ENCODE measurements at regions of chr7 and their contacts with region 1.

Region 1: DNA sequence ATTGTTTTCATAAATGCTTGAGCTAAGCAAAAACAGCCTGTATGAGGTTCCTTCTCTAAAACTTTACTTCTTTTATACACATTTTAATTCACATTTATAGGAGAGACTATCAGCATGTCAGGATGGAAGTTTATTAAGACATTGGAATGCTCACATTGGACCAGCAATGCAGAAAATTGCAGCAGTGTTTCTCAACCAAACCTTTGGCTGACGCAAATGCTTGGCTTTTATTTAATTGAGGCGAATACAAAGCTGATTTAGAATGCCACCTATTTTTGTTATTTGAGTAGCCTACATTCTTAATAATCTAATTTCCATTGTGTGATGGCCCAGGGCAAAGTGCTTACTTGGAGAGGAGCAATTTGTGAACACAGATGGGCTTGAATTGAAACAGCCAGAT is 283.2 kb downstream of the ARL4A start:
- DNase-seq: no peak
- ATAC-seq: no peak
- H3K4me3 ChIP-seq: no peak overlapping the region
- H3K27ac ChIP-seq: no peak overlapping the region
- H3K4me1 ChIP-seq: peaks cover 0 to 5% of the 10 kb centered on the region in 2 experiments; a peak in 3 of 4 replicates
- H3K27me3 ChIP-seq: no peaks in the 10 kb centered on the region
- CTCF ChIP-seq: no peak
- POLR2A ChIP-seq: no peak
- RAD21 ChIP-seq: no peak

Region 2: DNA sequence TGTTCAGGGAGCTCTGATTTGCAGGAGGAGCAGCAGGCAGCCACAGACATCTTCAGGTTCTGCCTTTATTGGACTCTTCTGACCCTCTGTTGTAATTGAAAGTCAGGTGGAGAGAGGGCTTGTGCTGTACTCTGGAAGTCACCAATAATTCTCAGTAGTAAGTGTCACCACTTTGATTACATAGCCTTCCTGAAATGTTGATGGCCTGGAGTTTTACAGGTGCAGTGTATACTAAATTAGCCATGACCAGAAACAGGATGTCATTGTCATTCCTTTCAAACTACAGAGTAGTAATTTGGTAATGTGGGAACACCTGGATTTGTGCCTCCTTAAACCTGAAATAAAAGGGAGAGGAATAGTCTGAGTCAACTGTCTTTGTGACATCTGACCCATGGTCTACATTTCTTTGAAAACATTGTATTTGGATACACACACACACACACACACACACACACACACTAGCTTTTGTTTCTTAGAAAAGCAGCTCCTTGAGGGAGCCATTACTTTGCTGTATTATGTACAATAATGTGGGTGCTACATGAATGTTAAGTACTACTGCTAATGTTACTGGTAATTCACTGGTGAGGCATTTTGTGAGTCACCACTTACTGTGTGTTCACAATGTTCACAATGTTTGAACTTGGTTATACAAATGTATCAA is 263.6 kb before region 1 on chr7:
- CTCF ChIA-PET with region 1: no interaction called
- POLR2A ChIA-PET with region 1: no interaction called
- RAD21 ChIA-PET with region 1: no interaction called
- intact Hi-C with region 1: no loop called
- DNase-seq: no peak
- ATAC-seq: peak; percentile 73
- H3K4me3 ChIP-seq: no peak overlapping the region
- H3K27ac ChIP-seq: peak overlapping the region; percentile 51
- H3K4me1 ChIP-seq: peaks cover 25 to 26% of the 10 kb centered on the region in 2 experiments
- H3K27me3 ChIP-seq: no peaks in the 10 kb centered on the region
- CTCF ChIP-seq: no peak
- POLR2A ChIP-seq: no peak
- RAD21 ChIP-seq: 0 out of 2 replicates have a peak, but pooled peaks have one; percentile 2

Region 3: GRCh38 chr7:12993025-12993424 is 22.4 kb after region 1 on chr7:
- CTCF ChIA-PET with region 1: no interaction called
- POLR2A ChIA-PET with region 1: no interaction called
- RAD21 ChIA-PET with region 1: no interaction called
- intact Hi-C with region 1: no loop called
- DNase-seq: no peak
- ATAC-seq: no peak
- H3K4me3 ChIP-seq: no peak overlapping the region
- H3K27ac ChIP-seq: no peak overlapping the region
- H3K4me1 ChIP-seq: no peaks in the 10 kb centered on the region
- H3K27me3 ChIP-seq: no peaks in the 10 kb centered on the region
- CTCF ChIP-seq: no peak
- POLR2A ChIP-seq: no peak
- RAD21 ChIP-seq: no peak

Region 4: DNA sequence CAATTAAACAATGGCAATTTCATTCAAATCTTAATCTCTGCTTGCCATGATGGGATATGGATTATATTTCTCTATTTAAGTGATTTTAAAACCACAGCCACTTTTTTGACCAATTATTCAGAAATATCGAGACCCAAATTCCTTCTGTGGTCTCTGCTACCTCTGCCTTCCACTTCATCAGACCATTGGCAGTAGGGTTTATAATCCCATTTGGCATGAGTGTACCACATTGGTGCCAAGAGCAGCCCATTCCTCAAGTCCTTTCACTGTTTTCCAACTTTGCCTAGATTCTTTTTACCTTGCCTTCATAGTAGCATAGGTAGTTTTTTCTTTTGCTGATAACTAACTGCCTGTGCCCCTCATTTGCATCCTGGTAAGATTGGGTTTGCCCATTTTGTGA is 36.7 kb after region 1 on chr7:
- CTCF ChIA-PET with region 1: no interaction called
- POLR2A ChIA-PET with region 1: no interaction called
- RAD21 ChIA-PET with region 1: no interaction called
- intact Hi-C with region 1: loop called (anchors 5 kb)
- DNase-seq: no peak
- ATAC-seq: no peak
- H3K4me3 ChIP-seq: no peak overlapping the region
- H3K27ac ChIP-seq: no peak overlapping the region
- H3K4me1 ChIP-seq: no peaks in the 10 kb centered on the region
- H3K27me3 ChIP-seq: no peaks in the 10 kb centered on the region
- CTCF ChIP-seq: no peak
- POLR2A ChIP-seq: no peak
- RAD21 ChIP-seq: no peak